Activated T-helper 1 cell treated with anti-CD3 and anti-CD28 coated beads, Interleukin-12 subunit alpha, Interleukin-12 subunit beta, Interleukin-2, Interleukin-4 antibody, amounts not matched to agents 30 ng/mL and 10 ng/mL and 1 ng/mL, durations not matched to agents 14 hours and 24 hours and 36 hours (primary cell): ENCODE measurements at regions of chr19 and their contacts with region 1.

Region 1: DNA sequence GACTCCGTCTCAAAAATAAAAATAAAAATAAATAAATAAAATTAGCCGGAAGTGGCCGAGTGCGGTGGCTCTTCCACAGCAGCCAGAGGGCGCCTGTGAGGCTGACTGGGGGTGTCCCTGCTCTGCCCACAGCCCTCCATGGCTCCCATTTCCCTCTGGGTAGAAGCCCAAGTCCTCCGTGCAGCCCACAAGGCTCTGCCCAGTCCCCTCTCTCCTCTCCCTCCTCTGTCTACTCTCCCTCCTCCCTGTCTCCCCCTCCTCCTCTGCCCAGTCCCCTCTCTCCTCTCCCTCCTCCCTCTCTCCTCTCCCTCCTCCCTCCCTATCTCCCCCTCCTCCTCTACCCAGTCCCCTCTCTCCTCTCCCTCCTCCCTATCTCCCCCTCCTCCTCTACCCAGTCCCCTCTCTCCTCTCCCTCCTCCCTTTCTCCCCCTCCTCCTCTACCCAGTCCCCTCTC is 20.4 kb downstream of the MISP start:
- DNase-seq: no peak
- H3K4me3 Mint-ChIP-seq: no peak overlapping the region
- H3K27ac Mint-ChIP-seq: no peak overlapping the region
- H3K4me1 Mint-ChIP-seq: peaks cover 5% of the 10 kb centered on the region
- H3K27me3 Mint-ChIP-seq: peaks cover 6% of the 10 kb centered on the region

Region 2: DNA sequence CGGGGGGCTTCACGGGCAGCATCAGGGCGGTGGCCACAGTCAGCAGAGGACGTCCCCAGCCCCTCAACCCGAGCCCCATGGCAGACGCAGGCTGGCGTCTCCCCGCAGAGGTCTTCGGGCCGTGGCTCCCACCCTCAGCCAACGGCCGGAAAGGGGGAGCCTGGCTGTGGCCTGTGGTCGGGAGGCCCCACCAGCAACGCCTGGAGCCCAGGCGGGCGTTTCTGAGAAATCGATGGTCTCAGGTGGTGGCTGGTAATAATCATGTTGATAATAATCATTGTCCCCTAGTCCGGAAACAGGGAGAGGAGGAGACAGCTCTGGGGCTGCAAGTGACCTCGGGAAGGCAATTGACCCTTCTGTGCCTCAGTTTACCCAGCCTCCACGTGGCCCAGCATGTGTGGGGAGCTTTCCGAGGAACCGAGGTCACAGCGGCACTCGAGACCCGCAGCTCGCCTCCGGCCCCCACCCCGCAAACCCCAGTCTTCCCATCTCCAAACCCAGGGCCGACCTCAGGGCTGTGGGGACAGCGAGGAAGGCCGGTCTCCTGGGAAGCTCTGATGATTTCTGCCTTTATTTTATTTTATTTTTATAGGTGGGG is 75.9 kb before region 1 on chr19 and contains the start of gene PRSS57:
- intact Hi-C with region 1: no loop called
- DNase-seq: no peak
- H3K4me3 Mint-ChIP-seq: no peak within 1 kb of the TSS
- H3K27ac Mint-ChIP-seq: no peak within 1 kb of the TSS
- H3K4me1 Mint-ChIP-seq: no peaks in the 10 kb centered on the region
- H3K27me3 Mint-ChIP-seq: peaks cover 11% of the 10 kb centered on the region
- total RNA-seq, gene PRSS57: not detected in 2 replicates

Region 3: DNA sequence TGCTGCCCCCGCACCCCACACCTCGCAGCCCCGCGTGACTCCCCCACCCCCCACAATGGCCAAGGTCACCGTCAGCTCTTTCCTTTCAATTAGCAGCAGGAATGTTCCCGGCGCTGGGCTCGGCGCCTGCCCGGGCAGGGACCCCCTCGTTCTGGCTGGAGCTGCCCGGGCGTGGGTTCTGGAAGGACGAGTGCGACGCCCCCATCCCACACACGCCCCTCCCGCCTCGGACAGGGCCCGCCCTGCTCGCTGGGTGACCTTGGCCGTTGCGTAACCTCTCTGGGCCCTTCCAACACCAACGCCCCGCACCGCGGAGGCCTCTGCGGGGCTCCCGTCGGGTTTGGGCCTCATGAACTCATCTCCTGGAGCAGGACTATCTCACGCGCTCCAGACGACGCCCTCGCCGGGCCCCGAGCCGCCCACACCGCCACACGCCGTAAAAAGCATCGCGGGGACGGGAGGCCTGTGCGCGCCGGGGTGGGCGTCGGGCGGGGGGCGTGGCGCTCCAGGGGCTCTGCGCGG is 52.3 kb before region 1 on chr19:
- intact Hi-C with region 1: no loop called
- DNase-seq: no peak
- H3K4me3 Mint-ChIP-seq: no peak overlapping the region
- H3K27ac Mint-ChIP-seq: no peak overlapping the region
- H3K4me1 Mint-ChIP-seq: no peaks in the 10 kb centered on the region
- H3K27me3 Mint-ChIP-seq: peaks cover 11% of the 10 kb centered on the region

Region 4: GRCh38 chr19:984165-984967 is 213.0 kb after region 1 on chr19 and contains the start of gene WDR18:
- intact Hi-C with region 1: loop called (anchors 1 kb)
- DNase-seq: peak; percentile 89
- H3K4me3 Mint-ChIP-seq: peak within 1 kb of the TSS; percentile 96
- H3K27ac Mint-ChIP-seq: peak within 1 kb of the TSS; percentile 91
- H3K4me1 Mint-ChIP-seq: no peaks in the 10 kb centered on the region
- H3K27me3 Mint-ChIP-seq: peaks cover 5% of the 10 kb centered on the region
- total RNA-seq, gene WDR18: 105 and 108 TPM in 2 replicates

Region 5: GRCh38 chr19:1001538-1002166 is 230.3 kb after region 1 on chr19:
- intact Hi-C with region 1: loop called (anchors 2 kb)
- DNase-seq: peak; percentile 58
- H3K4me3 Mint-ChIP-seq: no peak overlapping the region
- H3K27ac Mint-ChIP-seq: no peak overlapping the region
- H3K4me1 Mint-ChIP-seq: peaks cover 5% of the 10 kb centered on the region
- H3K27me3 Mint-ChIP-seq: peaks cover 33% of the 10 kb centered on the region